CD8-positive, alpha-beta T cell (primary cell): ENCODE measurements at regions of chr1 and their contacts with region 1.

Region 1: GRCh38 chr1:159009704-159010361 is at the start of gene IFI16:
- DNase-seq: peak in 8 of 9 experiments; percentile 27 to 87 (median 57)
- ATAC-seq: peak; percentile 77
- H3K4me3 ChIP-seq: peak within 1 kb of the TSS; percentile 63 to 74
- H3K4me3 Mint-ChIP-seq: peak within 1 kb of the TSS; percentile 90
- H3K27ac ChIP-seq: peak within 1 kb of the TSS; percentile 56 to 80
- H3K27ac Mint-ChIP-seq: peak within 1 kb of the TSS; percentile 93
- H3K4me1 ChIP-seq: peaks cover 36% of the 10 kb centered on the region
- H3K4me1 Mint-ChIP-seq: peaks cover 56% of the 10 kb centered on the region
- H3K27me3 ChIP-seq: no peaks in the 10 kb centered on the region
- H3K27me3 Mint-ChIP-seq: no peaks in the 10 kb centered on the region
- CTCF ChIP-seq: no peak
- total RNA-seq, gene IFI16: 26.1 to 32.1 TPM

Region 2: DNA sequence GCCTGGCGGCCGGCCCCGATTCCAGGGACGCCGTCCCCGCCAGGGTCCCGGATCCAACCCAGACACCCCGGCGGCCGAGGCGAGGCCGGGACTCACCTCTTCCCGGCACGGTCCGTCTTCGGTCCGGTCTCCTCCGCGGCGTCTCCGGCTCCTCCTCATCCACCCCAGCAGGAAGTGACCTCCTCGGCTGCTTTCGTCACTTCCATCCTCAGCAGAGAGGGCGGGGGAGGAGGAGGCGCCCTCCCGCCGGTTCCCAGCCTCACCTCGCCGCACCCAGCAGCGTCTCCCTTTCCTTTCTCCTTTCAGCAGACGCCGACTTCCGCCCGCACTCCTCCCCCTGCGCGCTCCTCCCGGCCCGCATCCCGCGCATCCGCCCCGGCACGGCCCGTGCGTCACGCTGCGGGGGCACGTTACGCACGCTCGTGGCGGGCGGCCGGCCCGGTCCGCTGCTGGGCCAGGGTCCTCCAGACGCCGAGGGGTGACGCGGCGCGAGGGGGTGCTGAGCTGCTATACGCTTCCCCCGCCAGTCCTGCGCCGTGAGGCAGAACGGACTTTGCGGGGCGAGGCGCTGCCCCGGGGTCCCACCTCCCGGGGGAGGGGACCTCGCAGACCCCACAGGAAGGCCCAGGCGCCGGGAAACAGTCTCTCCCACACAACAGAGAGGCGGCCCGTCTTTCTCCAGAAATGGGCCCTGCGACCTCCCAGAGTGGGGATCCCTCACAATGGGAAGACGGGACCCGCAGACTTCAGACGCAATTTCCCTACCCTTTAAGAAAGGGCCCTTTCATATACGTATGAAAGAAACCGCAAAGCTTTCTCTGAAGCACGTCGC is 1871.4 kb before region 1 on chr1 and contains the start of gene ETV3:
- CTCF ChIA-PET with region 1: no interaction called
- POLR2A ChIA-PET with region 1: no interaction called
- intact Hi-C with region 1: loop called in 1 of 2 experiments (anchors 10 kb)
- DNase-seq: peak; percentile 73 to 96 (median 87)
- ATAC-seq: peak; percentile 77
- H3K4me3 ChIP-seq: peak within 1 kb of the TSS; percentile 85 to 93
- H3K4me3 Mint-ChIP-seq: peak within 1 kb of the TSS; percentile 94
- H3K27ac ChIP-seq: peak within 1 kb of the TSS; percentile 84 to 97
- H3K27ac Mint-ChIP-seq: peak within 1 kb of the TSS; percentile 95
- H3K4me1 ChIP-seq: peaks cover 52% of the 10 kb centered on the region
- H3K4me1 Mint-ChIP-seq: peaks cover 54% of the 10 kb centered on the region
- H3K27me3 ChIP-seq: no peaks in the 10 kb centered on the region
- H3K27me3 Mint-ChIP-seq: no peaks in the 10 kb centered on the region
- CTCF ChIP-seq: no peak
- total RNA-seq, gene ETV3: 88.9 to 94.0 TPM

Region 3: GRCh38 chr1:158931055-158931737 is 78.6 kb before region 1 on chr1 and contains the start of gene PYHIN1:
- CTCF ChIA-PET with region 1: interaction called, 3 read pairs
- POLR2A ChIA-PET with region 1: no interaction called
- intact Hi-C with region 1: loop called (anchors 2 to 5 kb)
- DNase-seq: peak in 5 of 9 experiments; percentile 11 to 78 (median 42)
- ATAC-seq: peak; percentile 77
- H3K4me3 ChIP-seq: peak within 1 kb of the TSS; percentile 49 to 60
- H3K4me3 Mint-ChIP-seq: peak within 1 kb of the TSS; percentile 91
- H3K27ac ChIP-seq: peak within 1 kb of the TSS; percentile 39 to 76
- H3K27ac Mint-ChIP-seq: peak within 1 kb of the TSS; percentile 87
- H3K4me1 ChIP-seq: peaks cover 6% of the 10 kb centered on the region
- H3K4me1 Mint-ChIP-seq: peaks cover 33% of the 10 kb centered on the region
- H3K27me3 ChIP-seq: no peaks in the 10 kb centered on the region
- H3K27me3 Mint-ChIP-seq: no peaks in the 10 kb centered on the region
- CTCF ChIP-seq: no peak
- total RNA-seq, gene PYHIN1: 16.0 to 16.7 TPM

Region 4: DNA sequence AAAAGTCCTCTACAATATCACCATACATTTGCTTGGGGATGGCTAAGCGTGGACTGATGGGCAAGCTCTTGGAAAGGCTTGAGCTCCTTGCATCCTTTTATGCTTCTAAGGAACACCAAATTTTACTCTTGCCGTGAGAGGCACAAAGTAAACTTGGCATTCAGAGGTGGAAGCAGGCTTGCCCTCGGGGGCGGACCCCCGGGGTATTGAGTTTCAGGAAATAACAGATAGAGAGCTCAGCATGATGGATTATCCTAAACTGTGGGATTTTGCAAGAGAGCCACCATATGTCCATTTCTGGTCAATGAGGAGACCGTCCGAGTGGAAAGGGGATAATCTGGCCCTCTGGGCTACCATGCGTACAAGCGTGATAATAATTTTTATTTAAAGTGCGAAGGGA is 13.9 kb after region 1 on chr1:
- CTCF ChIA-PET with region 1: interaction called, 3 read pairs
- POLR2A ChIA-PET with region 1: no interaction called
- intact Hi-C with region 1: loop called in 1 of 2 experiments (anchors 2 kb)
- DNase-seq: no peak
- ATAC-seq: no peak
- H3K4me3 ChIP-seq: no peak overlapping the region
- H3K4me3 Mint-ChIP-seq: peak overlapping the region; percentile 22
- H3K27ac ChIP-seq: no peak overlapping the region
- H3K27ac Mint-ChIP-seq: peak overlapping the region; percentile 49
- H3K4me1 ChIP-seq: peaks cover 35% of the 10 kb centered on the region
- H3K4me1 Mint-ChIP-seq: peaks cover 72% of the 10 kb centered on the region
- H3K27me3 ChIP-seq: no peaks in the 10 kb centered on the region
- H3K27me3 Mint-ChIP-seq: no peaks in the 10 kb centered on the region
- CTCF ChIP-seq: no peak

Region 5: DNA sequence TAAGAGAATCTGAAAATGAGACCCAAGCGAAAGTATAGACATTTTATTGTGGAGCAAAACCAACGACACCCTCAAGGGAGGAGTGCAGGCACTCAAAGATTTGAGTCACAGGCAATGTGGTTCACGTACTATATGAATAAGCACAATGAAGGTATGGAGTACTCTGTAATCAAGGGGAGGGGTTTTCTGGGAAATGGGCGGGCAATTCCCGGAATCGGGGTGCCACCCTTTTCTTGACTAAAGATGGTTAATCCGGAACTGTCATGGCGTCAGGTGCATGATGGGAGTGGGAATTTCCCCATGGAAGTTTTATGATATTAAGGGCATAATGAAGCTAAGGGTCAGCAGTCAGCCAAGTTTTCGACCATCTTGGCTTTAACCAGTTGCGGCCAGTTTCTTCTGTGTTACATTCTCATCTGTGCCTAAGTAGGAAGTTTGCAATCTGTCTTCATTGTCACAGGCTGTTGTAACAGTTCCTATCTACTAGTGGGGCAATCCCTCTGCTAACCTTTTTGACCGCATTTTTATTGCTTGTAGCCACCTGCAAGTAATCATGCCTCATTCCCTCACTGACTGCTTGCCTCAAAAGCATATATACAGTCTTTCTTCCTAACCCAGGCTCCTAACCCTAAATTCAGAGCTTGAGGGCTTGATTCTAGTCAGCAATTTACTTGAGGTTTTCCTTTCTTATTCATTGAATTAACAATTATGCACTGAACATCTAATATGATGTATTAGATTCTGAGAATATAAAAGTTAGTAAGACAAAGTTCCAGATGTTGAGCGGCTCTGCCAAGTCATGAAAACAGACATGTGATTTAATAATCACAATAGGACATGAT is 67.5 kb after region 1 on chr1:
- CTCF ChIA-PET with region 1: interaction called, 3 read pairs
- POLR2A ChIA-PET with region 1: interaction called, 5 read pairs
- intact Hi-C with region 1: loop called (anchors 2 kb)
- DNase-seq: peak; percentile 56 to 91 (median 73)
- ATAC-seq: peak; percentile 78
- H3K4me3 ChIP-seq: peak overlapping the region in 1 of 2 experiments; percentile 44
- H3K4me3 Mint-ChIP-seq: peak overlapping the region; percentile 76
- H3K27ac ChIP-seq: peak overlapping the region; percentile 31 to 93
- H3K27ac Mint-ChIP-seq: peak overlapping the region; percentile 94
- H3K4me1 ChIP-seq: no peaks in the 10 kb centered on the region
- H3K4me1 Mint-ChIP-seq: peaks cover 14% of the 10 kb centered on the region
- H3K27me3 ChIP-seq: no peaks in the 10 kb centered on the region
- H3K27me3 Mint-ChIP-seq: no peaks in the 10 kb centered on the region
- CTCF ChIP-seq: no peak

Region 6: DNA sequence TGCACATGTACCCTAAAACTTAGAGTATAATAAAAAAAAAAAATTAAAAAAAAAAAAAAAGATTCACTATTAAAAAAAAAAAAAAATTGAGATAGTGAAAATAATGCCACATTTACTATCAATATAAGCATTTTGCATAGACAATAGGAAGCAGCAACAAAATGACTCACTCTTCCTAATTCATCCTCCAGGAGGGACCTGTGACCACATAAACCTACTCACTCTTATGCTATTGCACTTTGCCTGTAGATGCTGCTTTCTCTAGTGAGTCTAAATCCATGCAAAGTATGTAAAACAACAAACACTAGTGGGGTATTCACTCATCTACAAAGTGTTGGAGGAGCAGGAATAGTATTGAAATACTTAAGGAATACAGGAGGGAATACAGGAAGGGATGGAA is 523.1 kb after region 1 on chr1:
- CTCF ChIA-PET with region 1: no interaction called
- POLR2A ChIA-PET with region 1: no interaction called
- intact Hi-C with region 1: no loop called
- DNase-seq: no peak
- ATAC-seq: no peak
- H3K4me3 ChIP-seq: no peak overlapping the region
- H3K4me3 Mint-ChIP-seq: no peak overlapping the region
- H3K27ac ChIP-seq: no peak overlapping the region
- H3K27ac Mint-ChIP-seq: no peak overlapping the region
- H3K4me1 ChIP-seq: no peaks in the 10 kb centered on the region
- H3K4me1 Mint-ChIP-seq: no peaks in the 10 kb centered on the region
- H3K27me3 ChIP-seq: peaks cover 0 to 4% of the 10 kb centered on the region in 2 experiments
- H3K27me3 Mint-ChIP-seq: peaks cover 31% of the 10 kb centered on the region
- CTCF ChIP-seq: no peak